Activated CD8-positive, alpha-beta T cell treated with anti-CD3 and anti-CD28 coated beads, Interleukin-2, amount 10 ng/mL, durations not matched to agents 7 days and 5 days (primary cell): ENCODE measurements at regions of chr14 and their contacts with region 1.

Region 1: DNA sequence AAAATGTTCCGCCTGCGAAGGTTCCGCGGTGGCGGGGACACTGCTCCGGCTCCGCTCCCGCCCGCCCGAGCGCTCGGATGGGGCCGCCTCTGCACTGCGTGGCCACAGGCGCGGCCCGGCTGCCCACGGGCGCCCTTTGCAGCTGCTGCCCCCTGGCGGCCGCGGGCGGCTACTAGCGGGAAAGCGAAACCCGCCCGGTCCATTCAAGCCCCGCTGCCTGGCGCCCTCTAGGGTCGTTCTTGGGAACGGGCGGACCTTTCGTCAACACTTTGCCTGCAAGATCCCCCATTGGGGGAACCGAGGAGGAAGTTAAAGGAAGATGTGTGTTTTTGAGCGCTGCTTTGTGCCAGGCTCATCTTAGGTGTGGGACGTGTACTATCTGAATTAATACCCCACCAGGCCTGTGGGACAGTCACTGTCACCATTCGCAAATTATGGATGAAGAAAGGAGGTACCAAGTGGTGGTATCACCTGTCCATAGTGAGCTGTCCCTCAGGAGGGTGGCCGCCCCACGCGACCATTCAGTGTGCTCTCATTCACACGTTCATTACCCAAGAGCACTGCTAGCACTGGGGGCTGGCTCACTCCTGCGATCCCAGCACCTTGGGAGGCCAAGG is 19.4 kb downstream of the GPR132 start:
- DNase-seq: peak; percentile 95
- ATAC-seq: peak; percentile 96
- H3K4me3 Mint-ChIP-seq: no peak overlapping the region
- H3K27ac Mint-ChIP-seq: peak overlapping the region; percentile 56
- H3K4me1 Mint-ChIP-seq: peaks cover 17% of the 10 kb centered on the region
- H3K27me3 Mint-ChIP-seq: no peaks in the 10 kb centered on the region

Region 2: DNA sequence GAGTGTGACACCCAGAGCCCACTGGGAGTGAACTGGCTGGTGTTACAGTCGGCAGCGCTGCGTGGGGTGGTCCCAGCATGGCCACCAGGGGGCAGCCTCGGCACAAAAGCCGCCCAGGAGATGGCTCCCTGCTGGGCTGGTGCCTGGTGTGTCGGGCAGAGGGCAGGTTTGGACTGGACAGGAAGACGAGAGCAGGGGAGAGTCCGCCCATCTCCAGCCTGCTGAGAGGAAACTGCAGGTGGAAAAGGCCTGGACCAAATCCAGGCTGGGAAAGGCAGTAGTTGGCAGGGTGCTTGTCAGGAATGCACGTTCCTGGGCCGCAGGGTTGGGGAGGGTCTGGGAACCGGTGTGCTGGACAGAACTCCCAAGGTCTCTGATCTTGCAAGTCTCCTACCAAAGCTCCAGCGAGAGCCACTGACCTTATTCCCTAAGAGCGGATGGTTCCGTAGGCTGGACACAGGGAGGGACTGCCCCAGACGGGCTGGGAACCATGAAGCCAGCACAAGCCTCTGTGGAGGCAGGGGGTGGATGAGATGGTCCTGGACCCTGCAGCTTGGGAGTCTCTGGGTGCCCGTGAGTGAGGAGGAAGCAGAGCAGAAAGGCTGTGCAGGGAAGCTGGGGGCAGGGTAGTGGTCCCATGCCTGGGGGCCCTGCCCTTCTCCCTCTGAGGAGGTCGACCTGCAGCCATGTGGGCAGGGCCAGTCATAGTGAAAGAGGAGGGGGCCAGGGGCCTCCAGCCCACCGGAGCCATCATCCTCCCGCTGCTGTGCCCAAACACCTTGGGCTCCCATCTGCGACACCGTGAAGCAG is 69.4 kb before region 1 on chr14:
- CTCF ChIA-PET with region 1: interaction called, 63 read pairs
- POLR2A ChIA-PET with region 1: no interaction called
- DNase-seq: peak; percentile 88
- ATAC-seq: peak; percentile 86
- H3K4me3 Mint-ChIP-seq: peak overlapping the region; percentile 19
- H3K27ac Mint-ChIP-seq: no peak overlapping the region
- H3K4me1 Mint-ChIP-seq: peaks cover 10% of the 10 kb centered on the region
- H3K27me3 Mint-ChIP-seq: peaks cover 30% of the 10 kb centered on the region

Region 3: DNA sequence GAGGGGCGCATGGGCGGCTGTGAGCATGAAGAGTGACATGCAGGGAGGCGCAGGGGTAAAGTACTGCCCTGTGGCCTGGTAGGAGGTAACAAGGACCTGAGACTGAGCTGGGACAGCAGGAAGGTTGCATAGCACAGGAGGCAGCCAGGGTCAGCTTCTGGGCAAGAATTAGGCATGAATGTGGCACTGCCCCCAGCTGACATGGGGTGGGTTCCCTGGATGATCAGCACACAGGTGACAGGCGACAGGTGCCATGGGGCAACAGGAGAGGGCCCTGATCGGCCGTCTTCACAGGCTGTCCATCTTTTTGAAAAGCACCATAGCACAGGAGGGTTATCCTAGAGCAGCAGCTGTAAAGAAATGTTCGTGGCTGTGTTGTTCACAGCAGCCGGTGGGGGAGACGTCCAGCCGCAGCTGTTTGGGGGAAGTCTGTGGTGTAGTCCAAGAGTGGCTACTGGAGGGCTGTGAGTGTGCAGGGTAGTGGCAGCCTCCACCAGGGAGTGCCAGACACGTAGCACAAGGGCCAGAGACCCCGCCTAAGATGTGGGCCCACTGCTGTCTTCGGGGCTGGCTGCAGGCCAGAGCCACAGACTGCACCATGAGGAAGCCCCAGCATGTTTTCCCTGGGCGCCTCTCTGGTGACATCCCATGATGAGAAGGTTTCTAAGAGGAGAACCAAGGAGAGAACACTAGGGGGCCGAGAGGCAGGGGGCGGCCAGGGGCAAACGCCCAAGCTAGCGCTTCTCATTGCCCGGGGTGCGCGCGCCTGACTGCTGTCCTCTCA is 51.8 kb before region 1 on chr14:
- CTCF ChIA-PET with region 1: interaction called, 11 read pairs
- POLR2A ChIA-PET with region 1: no interaction called
- DNase-seq: no peak
- ATAC-seq: no peak
- H3K4me3 Mint-ChIP-seq: no peak overlapping the region
- H3K27ac Mint-ChIP-seq: peak overlapping the region; percentile 2
- H3K4me1 Mint-ChIP-seq: no peaks in the 10 kb centered on the region
- H3K27me3 Mint-ChIP-seq: no peaks in the 10 kb centered on the region

Region 4: GRCh38 chr14:105026803-105027563 is 18.8 kb before region 1 on chr14:
- CTCF ChIA-PET with region 1: interaction called, 38 read pairs
- POLR2A ChIA-PET with region 1: interaction called, 4 read pairs
- DNase-seq: no peak
- ATAC-seq: no peak
- H3K4me3 Mint-ChIP-seq: no peak overlapping the region
- H3K27ac Mint-ChIP-seq: peak overlapping the region; percentile 73
- H3K4me1 Mint-ChIP-seq: peaks cover 36% of the 10 kb centered on the region
- H3K27me3 Mint-ChIP-seq: no peaks in the 10 kb centered on the region

Region 5: GRCh38 chr14:105065280-105066228 is 19.7 kb after region 1 on chr14 and contains the start of gene GPR132:
- CTCF ChIA-PET with region 1: interaction called, 92 read pairs
- POLR2A ChIA-PET with region 1: interaction called, 4 read pairs
- DNase-seq: peak; percentile 97
- ATAC-seq: peak; percentile 86
- H3K4me3 Mint-ChIP-seq: peak within 1 kb of the TSS; percentile 88
- H3K27ac Mint-ChIP-seq: peak within 1 kb of the TSS; percentile 94
- H3K4me1 Mint-ChIP-seq: peaks cover 74% of the 10 kb centered on the region
- H3K27me3 Mint-ChIP-seq: no peaks in the 10 kb centered on the region
- total RNA-seq, gene GPR132: 35.7 to 40.4 TPM